Posterior vena cava (tissue), 2 donors: ENCODE measurements at regions of chr12 and their contacts with region 1.

Region 1: GRCh38 chr12:107448198-107448597 is 237.4 kb upstream of the PWP1 start:
- DNase-seq: no peak

Region 2: DNA sequence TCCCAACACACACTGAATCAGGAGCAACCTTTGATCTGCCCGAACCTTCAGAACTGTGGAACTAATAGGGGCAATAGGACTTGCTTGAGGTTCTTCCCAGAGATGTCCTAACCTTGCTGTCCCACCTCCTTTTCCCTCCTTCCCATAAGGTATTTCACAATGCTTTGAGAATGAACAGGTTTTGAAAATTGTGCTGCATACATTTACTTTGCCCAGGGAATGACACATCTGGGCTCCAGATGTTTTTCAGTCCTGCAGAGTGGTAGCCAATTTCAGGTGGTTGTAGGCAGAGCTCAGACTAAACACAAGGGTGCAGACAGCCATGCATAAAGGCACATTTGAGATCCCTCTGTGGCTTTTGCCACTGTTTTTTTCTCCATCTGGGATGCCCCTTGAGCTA is 30.7 kb after region 1 on chr12:
- intact Hi-C with region 1: no loop called
- DNase-seq: no peak

Region 3: GRCh38 chr12:108119126-108119976 is 671.2 kb after region 1 on chr12:
- intact Hi-C with region 1: loop called in 1 of 2 experiments (anchors 10 kb)
- DNase-seq: no peak